WTC11 (cell line): ENCODE measurements at regions of chr7 and their contacts with region 1.

Region 1: GRCh38 chr7:35519971-35520809 is 174.7 kb downstream of the HERPUD2 start:
- DNase-seq: peak; percentile 71
- ATAC-seq: peak; percentile 89
- H3K4me3 Mint-ChIP-seq: no peak overlapping the region
- H3K27ac Mint-ChIP-seq: no peak overlapping the region
- H3K4me1 Mint-ChIP-seq: no peaks in the 10 kb centered on the region
- H3K27me3 Mint-ChIP-seq: no peaks in the 10 kb centered on the region
- CTCF ChIP-seq: peak; percentile 75

Region 2: DNA sequence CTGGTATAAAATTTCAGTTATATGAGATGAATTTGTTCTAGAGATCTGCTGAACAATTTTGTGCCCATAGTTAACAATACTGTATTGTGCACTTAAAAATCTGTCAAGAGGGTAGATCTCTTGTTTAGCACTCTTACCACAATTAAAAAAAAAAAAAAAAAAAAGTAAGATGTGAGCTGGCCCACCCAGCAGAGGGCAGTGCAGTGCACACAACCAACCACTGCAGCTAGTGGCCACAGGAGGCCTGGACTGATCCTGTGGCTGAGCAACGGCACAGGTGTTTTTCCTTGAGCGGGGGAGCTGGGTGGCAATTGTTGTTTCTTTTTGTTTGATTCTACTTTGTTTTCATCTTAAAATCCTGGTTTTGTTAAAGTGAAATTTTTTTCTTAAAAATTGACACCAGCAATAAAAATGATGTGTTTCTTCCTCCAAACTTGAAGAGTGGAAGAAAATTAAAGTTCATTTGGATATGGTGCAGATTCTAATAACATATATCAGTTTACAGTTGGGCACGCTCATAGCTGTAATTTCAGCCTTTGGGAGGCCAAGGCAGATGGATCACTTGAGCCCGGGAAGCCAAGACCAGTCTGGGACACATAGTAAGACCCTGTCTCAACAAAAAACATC is 95.2 kb before region 1 on chr7:
- CTCF ChIA-PET with region 1: interaction called, 33 read pairs
- POLR2A ChIA-PET with region 1: no interaction called
- DNase-seq: peak; percentile 61
- ATAC-seq: peak; percentile 82
- H3K4me3 Mint-ChIP-seq: no peak overlapping the region
- H3K27ac Mint-ChIP-seq: no peak overlapping the region
- H3K4me1 Mint-ChIP-seq: no peaks in the 10 kb centered on the region
- H3K27me3 Mint-ChIP-seq: peaks cover 18% of the 10 kb centered on the region
- CTCF ChIP-seq: peak; percentile 42; the same call in 1 of the 2 replicates

Region 3: GRCh38 chr7:35454575-35455385 is 65.4 kb before region 1 on chr7:
- CTCF ChIA-PET with region 1: interaction called, 16 read pairs
- POLR2A ChIA-PET with region 1: no interaction called
- DNase-seq: peak; percentile 39
- ATAC-seq: peak; percentile 81
- H3K4me3 Mint-ChIP-seq: peak overlapping the region; percentile 83
- H3K27ac Mint-ChIP-seq: no peak overlapping the region
- H3K4me1 Mint-ChIP-seq: peaks cover 6% of the 10 kb centered on the region
- H3K27me3 Mint-ChIP-seq: peaks cover 57% of the 10 kb centered on the region
- CTCF ChIP-seq: no peak

Region 4: GRCh38 chr7:35530124-35531109 is 10.2 kb after region 1 on chr7:
- CTCF ChIA-PET with region 1: interaction called, 14 read pairs
- POLR2A ChIA-PET with region 1: no interaction called
- DNase-seq: no peak
- ATAC-seq: no peak
- H3K4me3 Mint-ChIP-seq: no peak overlapping the region
- H3K27ac Mint-ChIP-seq: no peak overlapping the region
- H3K4me1 Mint-ChIP-seq: no peaks in the 10 kb centered on the region
- H3K27me3 Mint-ChIP-seq: no peaks in the 10 kb centered on the region
- CTCF ChIP-seq: no peak

Region 5: GRCh38 chr7:35624299-35625186 is 104.4 kb after region 1 on chr7:
- CTCF ChIA-PET with region 1: interaction called, 17 read pairs
- POLR2A ChIA-PET with region 1: no interaction called
- DNase-seq: peak; percentile 52
- ATAC-seq: peak; percentile 97
- H3K4me3 Mint-ChIP-seq: no peak overlapping the region
- H3K27ac Mint-ChIP-seq: no peak overlapping the region
- H3K4me1 Mint-ChIP-seq: peaks cover 17% of the 10 kb centered on the region
- H3K27me3 Mint-ChIP-seq: no peaks in the 10 kb centered on the region
- CTCF ChIP-seq: peak; percentile 69

Region 6: DNA sequence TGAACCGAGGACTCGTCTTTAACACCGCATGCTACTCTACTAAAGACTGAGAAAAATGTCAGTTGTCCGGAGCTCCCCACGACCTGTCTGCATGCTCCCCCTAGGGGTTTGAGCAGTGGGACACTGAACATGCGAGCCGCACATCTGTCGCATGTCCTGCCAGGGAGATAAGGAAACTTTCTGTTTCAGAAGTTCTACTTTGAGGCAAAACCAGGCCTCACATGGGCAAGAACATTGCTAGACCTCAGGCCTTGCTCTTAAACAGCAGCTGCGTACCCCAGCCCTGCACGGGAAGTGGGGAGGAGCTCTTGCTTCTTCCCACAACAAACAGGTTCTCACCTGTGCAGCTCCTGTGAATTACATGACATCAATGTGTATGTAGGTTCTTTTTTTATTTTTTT is 205.1 kb after region 1 on chr7:
- CTCF ChIA-PET with region 1: no interaction called
- POLR2A ChIA-PET with region 1: no interaction called
- DNase-seq: no peak
- ATAC-seq: peak; percentile 72
- H3K4me3 Mint-ChIP-seq: no peak overlapping the region
- H3K27ac Mint-ChIP-seq: no peak overlapping the region
- H3K4me1 Mint-ChIP-seq: no peaks in the 10 kb centered on the region
- H3K27me3 Mint-ChIP-seq: no peaks in the 10 kb centered on the region
- CTCF ChIP-seq: no peak